ENCODE measurements at regions of chr19 and their contacts with region 1.

Region 1: GRCh38 chr19:1087813-1088415 is 7.3 kb downstream of the POLR2E start:
- DNase-seq: peak in 10 of 14 experiments; percentile 44 to 87 (median 63)
- ATAC-seq: peak; percentile 58
- H3K4me3 ChIP-seq: no peak overlapping the region
- H3K4me3 Mint-ChIP-seq: peak overlapping the region; percentile 71
- H3K27ac ChIP-seq: peak overlapping the region; percentile 59 to 68
- H3K27ac Mint-ChIP-seq: peak overlapping the region; percentile 82
- H3K4me1 ChIP-seq: peaks cover 77% of the 10 kb centered on the region
- H3K4me1 Mint-ChIP-seq: peaks cover 27% of the 10 kb centered on the region
- H3K27me3 ChIP-seq: no peaks in the 10 kb centered on the region
- H3K27me3 Mint-ChIP-seq: no peaks in the 10 kb centered on the region
- CTCF ChIP-seq: peak; percentile 5

Region 2: DNA sequence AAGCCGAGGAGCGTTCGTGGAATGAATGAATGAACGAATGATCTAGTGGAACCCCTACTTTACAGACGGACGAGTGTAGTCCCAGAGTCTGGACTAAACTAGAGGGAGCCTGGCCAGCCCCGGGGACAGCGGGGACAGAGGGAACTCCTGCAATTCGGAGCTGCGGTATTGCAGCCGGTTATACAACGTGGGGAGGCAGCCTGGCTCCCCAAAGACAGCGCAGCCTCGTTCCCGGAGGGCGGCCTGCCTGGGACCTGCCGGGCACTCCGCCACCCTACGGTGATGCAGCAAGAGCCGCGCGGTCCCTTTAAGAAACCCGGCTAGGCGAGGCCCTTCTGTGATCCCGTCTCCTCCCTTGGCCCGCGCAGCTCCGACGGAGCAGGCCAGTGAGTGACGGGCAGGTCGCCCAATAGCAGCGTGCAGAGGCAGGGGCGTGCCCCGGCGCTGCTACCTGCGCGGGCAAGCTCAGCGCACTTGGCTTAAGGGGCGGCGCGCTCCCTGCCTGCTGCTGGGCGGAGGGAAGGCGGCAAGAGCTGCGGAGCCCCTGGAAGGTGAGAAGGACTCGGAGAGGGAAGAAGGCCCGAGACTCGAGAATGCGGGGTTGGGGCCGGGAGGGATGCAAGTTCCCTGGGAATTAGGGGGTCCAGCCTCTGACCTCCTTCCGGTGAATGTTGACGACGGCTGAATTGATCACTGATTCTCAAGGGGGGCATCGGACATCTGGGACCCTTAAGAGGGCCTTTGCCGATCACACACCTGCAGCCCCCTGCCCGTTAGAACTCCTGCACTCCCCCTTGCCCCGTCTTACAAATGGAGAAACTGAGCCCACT is 48.1 kb before region 1 on chr19 and contains the start of gene ABCA7:
- CTCF ChIA-PET with region 1: interaction called, 4 read pairs
- POLR2A ChIA-PET with region 1: interaction called, 154 read pairs
- intact Hi-C with region 1: no loop called
- DNase-seq: peak; percentile 99 to 100 (median 99)
- ATAC-seq: peak; percentile 90
- H3K4me3 ChIP-seq: peak within 1 kb of the TSS; percentile 91
- H3K4me3 Mint-ChIP-seq: peak within 1 kb of the TSS; percentile 100
- H3K27ac ChIP-seq: peak within 1 kb of the TSS; percentile 43 to 51
- H3K27ac Mint-ChIP-seq: peak within 1 kb of the TSS; percentile 92
- H3K4me1 ChIP-seq: peaks cover 81% of the 10 kb centered on the region
- H3K4me1 Mint-ChIP-seq: peaks cover 51% of the 10 kb centered on the region
- H3K27me3 ChIP-seq: no peaks in the 10 kb centered on the region
- H3K27me3 Mint-ChIP-seq: no peaks in the 10 kb centered on the region
- CTCF ChIP-seq: no peak
- total RNA-seq, gene ABCA7: 114 to 118 TPM

Region 3: GRCh38 chr19:1057176-1057855 is 30.6 kb before region 1 on chr19:
- CTCF ChIA-PET with region 1: no interaction called
- POLR2A ChIA-PET with region 1: interaction called, 1,253 read pairs
- intact Hi-C with region 1: no loop called
- DNase-seq: peak in 8 of 14 experiments; percentile 41 to 79 (median 58)
- ATAC-seq: peak; percentile 79
- H3K4me3 ChIP-seq: no peak overlapping the region
- H3K4me3 Mint-ChIP-seq: no peak overlapping the region
- H3K27ac ChIP-seq: peak overlapping the region in 1 of 2 donors; percentile 22
- H3K27ac Mint-ChIP-seq: peak overlapping the region; percentile 36
- H3K4me1 ChIP-seq: peaks cover 30% of the 10 kb centered on the region
- H3K4me1 Mint-ChIP-seq: peaks cover 32% of the 10 kb centered on the region
- H3K27me3 ChIP-seq: no peaks in the 10 kb centered on the region
- H3K27me3 Mint-ChIP-seq: no peaks in the 10 kb centered on the region
- CTCF ChIP-seq: peak; percentile 46

Region 4: DNA sequence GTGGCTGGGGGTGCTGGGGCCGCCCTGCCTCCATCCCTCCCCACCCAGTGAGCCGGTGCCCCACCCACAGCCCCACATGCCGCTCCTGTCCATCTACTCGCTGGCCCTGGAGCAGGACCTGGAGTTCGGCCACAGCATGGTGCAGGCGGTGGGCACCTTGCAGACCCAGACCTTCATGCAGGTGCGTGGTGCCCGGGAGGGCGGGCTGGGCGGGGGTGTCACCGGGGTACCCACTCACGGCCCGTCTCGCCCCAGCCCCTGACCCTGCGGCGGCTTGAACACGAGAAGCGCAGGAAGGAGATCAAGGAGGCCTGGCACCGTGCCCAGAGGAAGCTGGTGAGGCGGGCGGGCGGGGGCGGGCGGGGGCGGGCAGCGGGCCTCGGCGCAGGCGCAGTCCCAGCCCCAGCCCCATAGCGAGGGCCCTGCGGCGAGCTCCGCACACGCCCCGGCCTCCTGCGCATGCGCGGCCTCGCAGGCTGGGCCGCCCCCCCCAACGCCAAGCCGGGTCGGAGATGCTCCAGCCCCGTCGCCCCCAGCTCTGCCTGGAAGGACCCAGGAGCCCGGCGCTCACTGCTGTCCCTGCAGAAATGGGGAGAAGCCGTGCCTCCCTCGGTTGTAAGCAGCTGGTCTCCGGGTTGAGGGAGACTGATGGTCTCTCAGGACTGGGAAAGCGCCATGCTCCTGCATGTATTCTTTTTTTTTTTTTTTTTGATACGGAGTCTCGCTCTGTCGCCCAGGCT is 13.2 kb before region 1 on chr19:
- CTCF ChIA-PET with region 1: interaction called, 8 read pairs
- POLR2A ChIA-PET with region 1: interaction called, 1,253 read pairs
- intact Hi-C with region 1: loop called (anchors 1 to 2 kb)
- DNase-seq: peak; percentile 95 to 100 (median 97)
- ATAC-seq: peak; percentile 25
- H3K4me3 ChIP-seq: peak overlapping the region; percentile 48
- H3K4me3 Mint-ChIP-seq: peak overlapping the region; percentile 87
- H3K27ac ChIP-seq: peak overlapping the region; percentile 52 to 96
- H3K27ac Mint-ChIP-seq: peak overlapping the region; percentile 98
- H3K4me1 ChIP-seq: peaks cover 89% of the 10 kb centered on the region
- H3K4me1 Mint-ChIP-seq: peaks cover 53% of the 10 kb centered on the region
- H3K27me3 ChIP-seq: no peaks in the 10 kb centered on the region
- H3K27me3 Mint-ChIP-seq: peaks cover 4% of the 10 kb centered on the region
- CTCF ChIP-seq: no peak

Region 5: DNA sequence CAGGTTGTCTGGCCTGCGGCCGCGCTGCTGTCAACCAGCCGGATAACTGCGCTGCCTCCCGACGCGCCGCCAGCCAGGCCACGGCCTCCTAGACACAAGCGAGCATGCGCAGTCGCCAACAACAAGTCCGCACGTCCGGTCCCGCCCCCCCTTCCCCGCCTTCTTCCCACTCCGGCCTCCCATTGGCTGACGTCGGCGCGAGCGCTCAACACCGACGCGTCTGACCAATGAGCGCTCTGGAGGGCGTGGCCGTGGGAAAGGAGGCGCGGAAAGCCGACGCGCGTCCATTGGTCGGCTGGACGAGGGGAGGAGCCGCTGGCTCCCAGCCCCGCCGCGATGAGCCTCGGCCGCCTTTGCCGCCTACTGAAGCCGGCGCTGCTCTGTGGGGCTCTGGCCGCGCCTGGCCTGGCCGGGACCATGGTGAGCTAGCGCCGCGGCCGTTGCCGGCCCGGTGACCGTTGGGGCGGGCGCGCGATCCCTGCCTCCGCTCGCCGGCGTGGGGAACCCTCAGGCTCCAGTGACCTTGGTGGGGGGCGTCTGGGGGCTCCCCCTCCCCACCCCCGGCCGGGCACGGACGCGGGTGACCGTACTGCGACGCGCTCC is 15.9 kb after region 1 on chr19 and contains the start of gene GPX4:
- CTCF ChIA-PET with region 1: interaction called, 6 read pairs
- POLR2A ChIA-PET with region 1: interaction called, 74 read pairs
- intact Hi-C with region 1: no loop called
- DNase-seq: peak; percentile 97 to 100 (median 98)
- ATAC-seq: peak; percentile 89
- H3K4me3 ChIP-seq: peak within 1 kb of the TSS; percentile 76
- H3K4me3 Mint-ChIP-seq: peak within 1 kb of the TSS; percentile 89
- H3K27ac ChIP-seq: peak within 1 kb of the TSS; percentile 69 to 96
- H3K27ac Mint-ChIP-seq: peak within 1 kb of the TSS; percentile 95
- H3K4me1 ChIP-seq: peaks cover 62% of the 10 kb centered on the region
- H3K4me1 Mint-ChIP-seq: peaks cover 31% of the 10 kb centered on the region
- H3K27me3 ChIP-seq: no peaks in the 10 kb centered on the region
- H3K27me3 Mint-ChIP-seq: no peaks in the 10 kb centered on the region
- CTCF ChIP-seq: no peak
- total RNA-seq, gene GPX4: 174 to 175 TPM

Region 6: GRCh38 chr19:1141944-1142343 is 54.0 kb after region 1 on chr19:
- CTCF ChIA-PET with region 1: no interaction called
- POLR2A ChIA-PET with region 1: no interaction called
- intact Hi-C with region 1: no loop called
- DNase-seq: no peak
- ATAC-seq: no peak
- H3K4me3 ChIP-seq: no peak overlapping the region
- H3K4me3 Mint-ChIP-seq: no peak overlapping the region
- H3K27ac ChIP-seq: no peak overlapping the region
- H3K27ac Mint-ChIP-seq: no peak overlapping the region
- H3K4me1 ChIP-seq: no peaks in the 10 kb centered on the region
- H3K4me1 Mint-ChIP-seq: no peaks in the 10 kb centered on the region
- H3K27me3 ChIP-seq: no peaks in the 10 kb centered on the region
- H3K27me3 Mint-ChIP-seq: no peaks in the 10 kb centered on the region
- CTCF ChIP-seq: no peak

Region 7: DNA sequence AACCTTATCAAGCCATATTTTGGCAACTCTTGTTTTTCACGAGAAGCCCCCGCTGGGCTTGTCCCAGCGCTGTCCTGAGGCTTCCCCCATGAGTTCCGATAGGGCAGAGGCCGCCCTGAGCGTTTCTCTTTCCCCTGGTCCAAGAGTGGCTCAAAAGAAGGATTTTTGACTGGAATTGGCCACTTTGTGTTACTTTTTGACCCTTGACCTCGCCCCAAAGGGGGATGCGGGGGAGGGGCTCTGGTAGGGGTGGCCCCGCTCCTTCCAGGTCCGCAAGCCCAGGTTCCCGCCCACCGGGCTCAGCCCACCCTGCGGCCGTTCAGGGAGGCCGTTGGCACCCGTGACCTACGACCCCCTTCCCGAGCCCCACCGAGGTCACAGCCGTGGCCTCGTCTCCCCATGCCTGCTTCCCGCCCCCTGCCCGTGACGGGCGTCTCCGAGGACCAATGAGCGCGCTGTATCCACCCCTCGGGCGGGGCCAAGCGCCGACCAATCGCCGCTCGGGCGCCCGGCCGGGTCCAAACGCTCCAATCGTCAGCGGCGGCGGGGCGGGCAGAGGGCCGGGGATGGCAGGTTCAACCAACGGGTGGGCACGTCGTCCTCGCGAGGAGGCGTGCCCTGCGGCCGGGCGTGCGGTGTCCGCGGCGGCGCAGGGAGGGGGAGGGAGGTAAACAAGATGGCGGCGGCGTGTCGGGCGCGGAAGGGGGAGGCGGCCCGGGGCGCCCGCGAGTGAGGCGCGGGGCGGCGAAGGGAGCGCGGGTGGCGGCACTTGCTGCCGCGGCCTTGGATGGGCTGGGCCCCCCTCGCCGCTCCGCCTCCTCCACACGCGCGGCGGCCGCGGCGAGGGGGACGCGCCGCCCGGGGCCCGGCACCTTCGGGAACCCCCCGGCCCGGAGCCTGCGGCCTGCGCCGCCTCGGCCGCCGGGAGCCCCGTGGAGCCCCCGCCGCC is 117.5 kb after region 1 on chr19 and contains the start of gene STK11:
- CTCF ChIA-PET with region 1: no interaction called
- POLR2A ChIA-PET with region 1: interaction called, 15 read pairs
- intact Hi-C with region 1: no loop called
- DNase-seq: peak; percentile 98 to 100 (median 99)
- ATAC-seq: peak; percentile 92
- H3K4me3 ChIP-seq: peak within 1 kb of the TSS; percentile 88
- H3K4me3 Mint-ChIP-seq: peak within 1 kb of the TSS; percentile 98
- H3K27ac ChIP-seq: peak within 1 kb of the TSS; percentile 48 to 64
- H3K27ac Mint-ChIP-seq: peak within 1 kb of the TSS; percentile 93
- H3K4me1 ChIP-seq: peaks cover 67% of the 10 kb centered on the region
- H3K4me1 Mint-ChIP-seq: peaks cover 31% of the 10 kb centered on the region
- H3K27me3 ChIP-seq: no peaks in the 10 kb centered on the region
- H3K27me3 Mint-ChIP-seq: no peaks in the 10 kb centered on the region
- CTCF ChIP-seq: no peak
- total RNA-seq, gene STK11: 49.7 to 53.0 TPM

Region 8: GRCh38 chr19:1336079-1336684 is 248.3 kb after region 1 on chr19:
- CTCF ChIA-PET with region 1: no interaction called
- POLR2A ChIA-PET with region 1: no interaction called
- intact Hi-C with region 1: no loop called
- DNase-seq: no peak
- ATAC-seq: no peak
- H3K4me3 ChIP-seq: no peak overlapping the region
- H3K4me3 Mint-ChIP-seq: no peak overlapping the region
- H3K27ac ChIP-seq: no peak overlapping the region
- H3K27ac Mint-ChIP-seq: no peak overlapping the region
- H3K4me1 ChIP-seq: no peaks in the 10 kb centered on the region
- H3K4me1 Mint-ChIP-seq: no peaks in the 10 kb centered on the region
- H3K27me3 ChIP-seq: peaks cover 0 to 3% of the 10 kb centered on the region in 2 experiments
- H3K27me3 Mint-ChIP-seq: peaks cover 4% of the 10 kb centered on the region
- CTCF ChIP-seq: no peak